ENCODE measurements at regions of chr3 and their contacts with region 1.

Region 1: DNA sequence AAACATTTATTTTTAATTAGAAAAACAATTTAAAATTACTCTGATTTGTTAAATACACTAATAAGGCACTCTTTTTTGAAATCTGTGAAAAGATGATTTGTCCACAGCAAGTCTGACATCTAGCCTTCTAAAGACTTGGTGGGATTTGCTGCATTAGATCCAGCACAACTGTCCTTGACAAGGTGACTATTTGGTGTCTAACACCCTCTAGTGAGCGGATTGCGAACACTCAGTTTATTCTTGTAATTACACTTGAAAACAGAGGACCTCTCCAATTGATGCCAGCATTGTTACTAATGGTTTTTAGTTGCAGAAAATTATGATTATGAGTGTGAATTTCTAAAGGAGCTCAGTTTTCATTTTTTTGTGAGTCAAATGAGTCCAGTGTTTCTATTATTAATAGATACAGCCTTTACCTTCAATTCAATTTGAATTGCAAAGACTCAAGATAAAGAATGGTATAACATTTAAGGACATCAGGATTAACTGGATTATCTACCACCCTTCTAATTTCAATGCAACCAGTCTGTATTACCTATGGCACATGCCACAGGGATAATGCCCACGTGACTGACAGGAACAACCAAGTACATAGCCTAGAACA is 29.7 kb upstream of the STRIT1 start:
- H3K4me3 Mint-ChIP-seq: no peak overlapping the region
- H3K27ac Mint-ChIP-seq: no peak overlapping the region
- H3K4me1 Mint-ChIP-seq: no peaks in the 10 kb centered on the region
- H3K27me3 Mint-ChIP-seq: no peaks in the 10 kb centered on the region

Region 2: GRCh38 chr3:154334973-154335420 is 988.2 kb before region 1 on chr3:
- intact Hi-C with region 1: loop called (anchors 2 kb)
- H3K4me3 Mint-ChIP-seq: no peak overlapping the region
- H3K27ac Mint-ChIP-seq: no peak overlapping the region
- H3K4me1 Mint-ChIP-seq: no peaks in the 10 kb centered on the region
- H3K27me3 Mint-ChIP-seq: peaks cover 3% of the 10 kb centered on the region

Region 3: DNA sequence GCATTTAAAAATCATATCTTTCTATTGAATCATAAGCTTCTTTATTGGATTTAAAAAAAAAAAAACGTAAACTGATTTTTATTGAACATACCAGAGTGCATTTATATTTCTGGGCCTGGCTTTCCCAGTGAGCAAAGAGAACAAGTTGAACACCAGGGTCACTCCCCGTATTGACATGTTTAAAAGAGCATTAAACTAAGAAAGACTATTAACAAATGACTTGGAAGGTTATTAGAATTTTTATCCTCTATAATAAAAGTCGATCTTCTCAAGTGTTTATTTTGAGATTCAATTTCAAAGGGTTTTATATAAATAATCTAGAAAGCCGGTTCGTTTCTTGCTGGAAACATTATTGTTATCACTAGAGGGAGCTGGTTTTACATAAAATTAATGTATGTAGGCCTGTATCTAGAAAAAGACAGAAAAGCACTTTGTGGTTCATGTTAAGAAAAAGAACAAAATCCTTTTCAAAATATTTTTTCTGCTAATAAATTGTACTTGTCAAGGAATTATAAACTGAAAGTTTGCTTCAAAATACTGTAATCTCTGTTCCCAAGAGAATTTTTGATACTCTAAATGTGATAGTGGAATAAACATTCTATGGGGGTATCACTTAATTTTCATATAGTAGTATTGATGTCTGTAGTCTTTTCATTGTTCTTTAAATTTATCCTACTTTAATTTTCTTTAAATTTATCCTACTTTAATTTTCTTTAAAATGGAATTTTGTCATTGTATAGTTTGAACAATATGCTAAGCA is 564.9 kb before region 1 on chr3:
- intact Hi-C with region 1: loop called (anchors 1 kb)
- H3K4me3 Mint-ChIP-seq: no peak overlapping the region
- H3K27ac Mint-ChIP-seq: no peak overlapping the region
- H3K4me1 Mint-ChIP-seq: no peaks in the 10 kb centered on the region
- H3K27me3 Mint-ChIP-seq: no peaks in the 10 kb centered on the region

Region 4: GRCh38 chr3:154904328-154904727 is 418.8 kb before region 1 on chr3:
- intact Hi-C with region 1: loop called (anchors 10 kb)
- H3K4me3 Mint-ChIP-seq: no peak overlapping the region
- H3K27ac Mint-ChIP-seq: no peak overlapping the region
- H3K4me1 Mint-ChIP-seq: peaks cover 5% of the 10 kb centered on the region
- H3K27me3 Mint-ChIP-seq: no peaks in the 10 kb centered on the region

Region 5: GRCh38 chr3:154954753-154955152 is 368.4 kb before region 1 on chr3:
- intact Hi-C with region 1: loop called (anchors 1 kb)
- H3K4me3 Mint-ChIP-seq: no peak overlapping the region
- H3K27ac Mint-ChIP-seq: no peak overlapping the region
- H3K4me1 Mint-ChIP-seq: no peaks in the 10 kb centered on the region
- H3K27me3 Mint-ChIP-seq: no peaks in the 10 kb centered on the region